ENCODE measurements at regions of chr16 and their contacts with region 1.

Region 1: GRCh38 chr16:57576429-57576870 is 34.0 kb downstream of the ADGRG5 start:
- DNase-seq: peak; percentile 71 to 92 (median 87)
- ATAC-seq: peak; percentile 86
- H3K4me3 ChIP-seq: no peak overlapping the region
- H3K4me3 Mint-ChIP-seq: no peak overlapping the region
- H3K27ac ChIP-seq: peak overlapping the region in 1 of 2 experiments; percentile 87
- H3K27ac Mint-ChIP-seq: no peak overlapping the region
- H3K4me1 ChIP-seq: peaks cover 33% of the 10 kb centered on the region
- H3K4me1 Mint-ChIP-seq: peaks cover 44% of the 10 kb centered on the region
- H3K27me3 ChIP-seq: no peaks in the 10 kb centered on the region
- H3K27me3 Mint-ChIP-seq: no peaks in the 10 kb centered on the region
- CTCF ChIP-seq: peak; percentile 96

Region 2: DNA sequence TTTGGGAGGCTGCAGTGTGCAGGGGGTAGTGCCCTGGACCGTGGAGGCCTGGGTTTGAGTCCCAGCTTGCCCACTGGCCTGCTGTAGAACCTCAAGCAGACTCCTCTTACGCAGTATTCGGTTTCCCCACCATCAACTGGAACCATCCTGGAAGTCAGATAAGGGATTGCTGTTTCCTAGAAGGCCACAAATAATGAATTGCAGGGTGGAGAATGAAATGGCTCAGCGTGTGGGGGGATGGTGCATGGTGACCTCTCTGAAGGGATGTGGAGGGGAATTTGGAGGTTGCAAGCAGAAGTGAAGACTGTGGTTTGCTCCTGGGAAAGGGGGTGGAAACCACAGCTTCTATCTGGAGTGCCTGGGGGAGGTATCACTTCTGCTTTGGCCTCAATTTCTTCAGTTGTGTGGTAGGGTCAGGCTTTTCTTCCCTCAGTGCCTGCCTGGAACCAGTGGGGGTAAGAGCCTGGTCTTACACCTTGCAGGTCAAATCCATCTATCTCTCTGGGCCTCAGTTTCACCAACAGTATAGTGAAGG is 32.3 kb before region 1 on chr16:
- CTCF ChIA-PET with region 1: interaction called, 23 read pairs
- POLR2A ChIA-PET with region 1: interaction called, 3 read pairs
- intact Hi-C with region 1: no loop called
- DNase-seq: peak in 3 of 9 experiments; percentile 47 to 67 (median 50)
- ATAC-seq: no peak
- H3K4me3 ChIP-seq: peak overlapping the region in 1 of 2 experiments; percentile 72
- H3K4me3 Mint-ChIP-seq: peak overlapping the region; percentile 73
- H3K27ac ChIP-seq: peak overlapping the region in 1 of 2 experiments; percentile 29
- H3K27ac Mint-ChIP-seq: peak overlapping the region; percentile 64
- H3K4me1 ChIP-seq: peaks cover 46% of the 10 kb centered on the region
- H3K4me1 Mint-ChIP-seq: peaks cover 52% of the 10 kb centered on the region
- H3K27me3 ChIP-seq: no peaks in the 10 kb centered on the region
- H3K27me3 Mint-ChIP-seq: no peaks in the 10 kb centered on the region
- CTCF ChIP-seq: no peak

Region 3: DNA sequence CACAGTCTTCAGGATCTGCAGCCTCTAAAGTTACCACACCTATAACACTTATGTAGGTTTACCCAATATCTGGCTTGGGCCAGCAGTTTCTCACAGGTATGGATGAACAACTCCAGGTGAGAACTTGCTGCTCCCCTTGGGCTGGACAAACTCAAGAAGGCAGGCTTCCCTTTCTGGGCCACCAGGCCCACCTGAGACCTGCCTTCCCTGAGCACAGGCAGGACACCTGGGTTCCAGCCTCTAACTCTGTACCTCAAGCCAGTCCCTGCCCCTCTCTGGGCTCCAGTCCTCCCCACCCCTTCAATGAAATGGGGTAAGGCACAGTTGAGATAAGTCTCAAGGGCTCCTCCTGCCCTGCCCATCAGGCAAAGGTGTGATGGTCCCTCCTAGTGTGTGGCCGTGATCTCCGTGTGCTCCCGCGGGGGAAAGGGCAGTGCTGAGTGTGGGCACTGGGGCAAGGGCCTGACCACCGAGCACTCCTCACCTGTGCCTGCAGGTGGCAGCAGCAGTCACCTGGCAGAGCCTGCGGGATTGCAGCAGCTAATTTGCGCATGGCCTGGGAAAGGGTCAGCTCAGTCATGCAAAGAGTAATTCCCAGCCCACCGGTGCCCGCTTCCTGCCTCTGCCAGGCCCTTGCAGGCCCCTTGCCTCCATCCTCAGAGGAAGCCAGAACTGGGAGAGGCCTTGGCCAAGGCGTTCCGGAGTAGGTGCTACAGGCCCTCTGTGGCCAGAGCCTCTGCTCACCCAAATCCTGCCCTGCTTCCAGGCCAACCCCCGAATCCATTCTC is 23.8 kb after region 1 on chr16:
- CTCF ChIA-PET with region 1: interaction called, 259 read pairs
- POLR2A ChIA-PET with region 1: interaction called, 10 read pairs
- intact Hi-C with region 1: no loop called
- DNase-seq: peak in 4 of 9 experiments; percentile 39 to 64 (median 55)
- ATAC-seq: peak; percentile 19
- H3K4me3 ChIP-seq: no peak overlapping the region
- H3K4me3 Mint-ChIP-seq: no peak overlapping the region
- H3K27ac ChIP-seq: peak overlapping the region in 1 of 2 experiments; percentile 84
- H3K27ac Mint-ChIP-seq: peak overlapping the region; percentile 57
- H3K4me1 ChIP-seq: peaks cover 44% of the 10 kb centered on the region
- H3K4me1 Mint-ChIP-seq: peaks cover 49% of the 10 kb centered on the region
- H3K27me3 ChIP-seq: no peaks in the 10 kb centered on the region
- H3K27me3 Mint-ChIP-seq: no peaks in the 10 kb centered on the region
- CTCF ChIP-seq: peak; percentile 34

Region 4: GRCh38 chr16:57648590-57649442 is 72.4 kb after region 1 on chr16:
- CTCF ChIA-PET with region 1: interaction called, 423 read pairs
- POLR2A ChIA-PET with region 1: interaction called, 6 read pairs
- intact Hi-C with region 1: loop called (anchors 1 kb)
- DNase-seq: peak; percentile 77 to 94 (median 86)
- ATAC-seq: peak; percentile 84
- H3K4me3 ChIP-seq: peak overlapping the region in 1 of 2 experiments; percentile 53
- H3K4me3 Mint-ChIP-seq: peak overlapping the region; percentile 29
- H3K27ac ChIP-seq: peak overlapping the region in 1 of 2 experiments; percentile 69
- H3K27ac Mint-ChIP-seq: peak overlapping the region; percentile 64
- H3K4me1 ChIP-seq: peaks cover 29% of the 10 kb centered on the region
- H3K4me1 Mint-ChIP-seq: peaks cover 37% of the 10 kb centered on the region
- H3K27me3 ChIP-seq: no peaks in the 10 kb centered on the region
- H3K27me3 Mint-ChIP-seq: no peaks in the 10 kb centered on the region
- CTCF ChIP-seq: peak; percentile 100

Region 5: GRCh38 chr16:57757326-57757786 is 180.9 kb after region 1 on chr16:
- CTCF ChIA-PET with region 1: interaction called, 8 read pairs
- POLR2A ChIA-PET with region 1: no interaction called
- intact Hi-C with region 1: loop called in 1 of 2 experiments (anchors 1 kb)
- DNase-seq: peak; percentile 79 to 93 (median 87)
- ATAC-seq: peak; percentile 97
- H3K4me3 ChIP-seq: no peak overlapping the region
- H3K4me3 Mint-ChIP-seq: no peak overlapping the region
- H3K27ac ChIP-seq: peak overlapping the region in 1 of 2 experiments; percentile 14
- H3K27ac Mint-ChIP-seq: no peak overlapping the region
- H3K4me1 ChIP-seq: no peaks in the 10 kb centered on the region
- H3K4me1 Mint-ChIP-seq: no peaks in the 10 kb centered on the region
- H3K27me3 ChIP-seq: no peaks in the 10 kb centered on the region
- H3K27me3 Mint-ChIP-seq: no peaks in the 10 kb centered on the region
- CTCF ChIP-seq: peak; percentile 80